Vagina (tissue), 2 donors: ENCODE measurements at regions of chr17 and their contacts with region 1.

Region 1: DNA sequence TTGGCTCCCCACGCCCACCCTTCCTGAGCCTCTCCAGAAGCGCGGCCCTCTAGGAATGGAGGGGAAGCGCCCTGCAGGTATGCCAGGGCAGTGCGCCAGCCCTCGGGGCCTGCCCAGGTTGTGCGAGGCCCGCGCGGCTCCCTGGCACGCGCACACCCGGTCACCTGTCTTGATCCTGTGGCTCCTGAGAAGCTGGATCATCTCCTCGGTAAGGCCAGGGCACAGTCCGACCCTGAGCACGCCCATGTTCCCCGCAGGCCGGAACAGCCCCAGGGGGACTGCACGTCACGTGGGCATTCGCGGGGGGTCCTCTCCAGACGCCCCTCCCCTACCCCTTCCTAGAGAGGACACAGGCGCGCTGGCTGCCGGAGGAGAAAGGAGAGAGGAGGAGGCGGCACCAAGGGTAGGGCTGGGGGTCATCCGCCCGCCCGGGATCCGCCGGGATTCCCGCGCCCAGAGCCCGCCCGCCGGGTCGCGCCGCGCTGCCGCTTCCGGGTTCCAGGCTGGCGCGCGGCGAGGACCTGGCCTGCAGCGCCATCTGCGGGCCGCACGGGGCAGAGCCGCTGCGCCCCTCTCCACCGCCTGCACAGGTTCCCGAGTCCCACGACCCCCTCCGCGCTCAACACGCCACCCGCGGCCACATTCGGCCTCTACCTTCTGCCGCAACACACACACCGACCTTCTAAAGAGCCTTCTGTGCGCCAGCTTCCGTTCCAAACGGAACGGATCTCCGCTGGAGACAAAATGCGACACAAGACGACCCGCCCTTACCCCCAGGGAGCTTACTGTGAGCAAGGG is at the start of gene RAD51D:
- DNase-seq: no peak
- H3K4me3 ChIP-seq: peak within 1 kb of the TSS; percentile 70 to 98
- H3K27ac ChIP-seq: peak within 1 kb of the TSS; percentile 76
- H3K4me1 ChIP-seq: peaks cover 16% of the 10 kb centered on the region
- H3K27me3 ChIP-seq: no peaks in the 10 kb centered on the region
- CTCF ChIP-seq: peak; percentile 82 to 99 (median 85)
- POLR2A ChIP-seq: no peak
- total RNA-seq, gene RAD51D: 5.2 TPM

Region 2: GRCh38 chr17:34420254-34420766 is 699.3 kb before region 1 on chr17:
- intact Hi-C with region 1: loop called (anchors 5 kb)
- DNase-seq: no peak
- H3K4me3 ChIP-seq: no peak overlapping the region
- H3K27ac ChIP-seq: no peak overlapping the region
- H3K4me1 ChIP-seq: no peaks in the 10 kb centered on the region
- H3K27me3 ChIP-seq: no peaks in the 10 kb centered on the region
- CTCF ChIP-seq: peak; percentile 42 to 86 (median 84)
- POLR2A ChIP-seq: no peak

Region 3: GRCh38 chr17:34542700-34543336 is 576.7 kb before region 1 on chr17:
- intact Hi-C with region 1: loop called (anchors 10 kb)
- DNase-seq: no peak
- H3K4me3 ChIP-seq: no peak overlapping the region
- H3K27ac ChIP-seq: no peak overlapping the region
- H3K4me1 ChIP-seq: no peaks in the 10 kb centered on the region
- H3K27me3 ChIP-seq: no peaks in the 10 kb centered on the region
- CTCF ChIP-seq: peak; percentile 36 to 62 (median 39)
- POLR2A ChIP-seq: no peak

Region 4: DNA sequence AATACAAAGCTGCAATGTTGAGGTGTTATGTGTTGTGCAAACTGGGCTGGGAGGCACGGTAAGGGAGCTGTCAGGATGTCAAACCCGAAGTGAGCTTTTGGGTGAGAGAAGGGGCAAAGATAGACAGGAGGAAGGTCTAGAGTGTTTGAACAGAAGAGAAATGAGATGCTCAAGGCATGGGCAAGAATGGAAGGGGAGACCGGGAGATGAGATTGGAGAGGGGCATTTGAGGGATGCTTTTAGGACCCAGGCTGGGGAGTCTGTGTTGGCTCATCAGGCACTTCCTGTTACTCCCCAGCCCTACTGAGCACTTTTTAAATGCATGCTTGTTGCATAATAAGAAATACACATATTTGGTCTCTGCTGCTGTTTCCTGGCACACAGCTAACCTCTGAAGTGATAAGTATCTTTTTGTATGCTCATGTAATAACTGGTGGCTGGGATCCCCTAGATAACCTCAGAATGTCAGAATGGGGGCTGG is 41.8 kb after region 1 on chr17:
- intact Hi-C with region 1: no loop called
- DNase-seq: no peak
- H3K4me3 ChIP-seq: no peak overlapping the region
- H3K27ac ChIP-seq: no peak overlapping the region
- H3K4me1 ChIP-seq: no peaks in the 10 kb centered on the region
- H3K27me3 ChIP-seq: no peaks in the 10 kb centered on the region
- CTCF ChIP-seq: no peak
- POLR2A ChIP-seq: no peak